ENCODE measurements at regions of chr14 and their contacts with region 1.

Region 1: DNA sequence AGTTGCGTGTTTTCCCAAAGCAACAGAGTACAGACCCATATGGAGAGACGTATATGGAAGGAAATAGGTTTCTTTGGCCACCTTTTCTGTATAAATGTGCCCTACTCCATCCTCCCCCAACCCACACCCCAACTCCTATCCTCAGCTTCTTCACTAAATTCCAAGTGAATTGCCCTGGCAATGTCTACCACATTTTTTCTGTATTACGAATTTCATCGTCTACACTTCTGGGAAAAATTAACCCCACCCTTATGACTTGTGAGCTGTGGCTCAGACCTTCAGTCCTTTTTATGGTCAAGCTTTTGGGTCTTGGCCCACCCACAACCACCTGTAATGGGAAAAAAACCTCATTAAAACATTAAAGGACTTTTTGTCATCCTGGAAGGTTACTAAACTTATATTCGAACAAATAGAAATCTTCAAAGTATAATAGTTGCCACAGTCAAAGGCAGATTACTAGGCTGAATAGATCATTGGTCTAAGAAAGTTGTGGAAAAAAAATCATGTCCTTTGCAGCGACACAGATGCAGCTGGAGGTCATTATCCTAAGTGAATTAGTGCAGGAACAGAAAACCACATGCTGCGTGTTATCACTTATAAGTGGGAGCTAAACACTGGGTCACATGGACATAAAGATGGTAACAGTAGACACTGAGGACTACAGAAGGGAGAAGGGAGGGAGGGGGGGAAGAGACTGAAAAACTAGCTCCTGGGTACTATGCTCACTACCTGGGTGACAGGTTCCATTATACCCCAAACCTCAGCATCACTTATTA is 15.7 kb upstream of the NFKBIA start:
- DNase-seq: no peak

Region 2: DNA sequence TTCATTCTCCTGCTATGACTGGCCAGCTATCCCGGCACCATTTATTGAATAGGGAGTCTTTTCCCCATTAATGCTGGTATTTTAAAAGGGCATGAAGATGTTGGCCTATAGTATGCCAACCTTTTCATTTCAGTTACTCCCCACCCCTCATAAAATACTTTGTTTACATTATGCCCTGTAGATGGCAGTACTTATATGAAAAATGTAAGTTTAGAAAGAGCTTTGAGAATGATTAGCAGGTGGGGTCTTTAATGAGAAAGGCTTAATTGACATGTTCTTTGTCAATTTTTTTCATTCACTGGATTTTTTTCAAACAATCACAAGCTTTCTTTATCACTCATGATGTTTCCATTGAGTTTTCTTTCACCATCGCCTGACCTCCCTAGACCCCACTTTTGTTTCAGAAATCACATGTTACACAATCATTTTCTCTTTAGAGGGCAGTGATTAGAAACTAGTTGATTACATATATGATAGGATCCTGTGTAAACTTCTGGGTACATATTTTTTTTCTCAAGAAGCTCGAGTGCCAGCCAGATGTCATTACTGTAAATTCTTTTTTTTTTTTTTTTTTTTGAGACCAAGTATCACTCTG is 190.6 kb before region 1 on chr14:
- CTCF ChIA-PET with region 1: interaction called, 11 read pairs
- POLR2A ChIA-PET with region 1: no interaction called
- DNase-seq: no peak

Measured in HEK293T (cell line).